Activated T-helper 1 cell treated with anti-CD3 and anti-CD28 coated beads, Interleukin-12 subunit alpha, Interleukin-12 subunit beta, Interleukin-2, Interleukin-4 antibody, amounts not matched to agents 30 ng/mL and 10 ng/mL and 1 ng/mL, durations not matched to agents 14 hours and 24 hours and 36 hours (primary cell): ENCODE measurements at regions of chr6 and their contacts with region 1.

Region 1: GRCh38 chr6:79869600-79870084 is 77.7 kb downstream of the ELOVL4 start:
- DNase-seq: peak; percentile 72
- H3K4me3 Mint-ChIP-seq: no peak overlapping the region
- H3K27ac Mint-ChIP-seq: no peak overlapping the region
- H3K4me1 Mint-ChIP-seq: peaks cover 9% of the 10 kb centered on the region
- H3K27me3 Mint-ChIP-seq: peaks cover 5% of the 10 kb centered on the region

Region 2: GRCh38 chr6:78867370-78868040 is 1002.1 kb before region 1 on chr6 and contains the start of gene IRAK1BP1:
- intact Hi-C with region 1: loop called (anchors 10 kb)
- DNase-seq: peak; percentile 79
- H3K4me3 Mint-ChIP-seq: peak within 1 kb of the TSS; percentile 97
- H3K27ac Mint-ChIP-seq: peak within 1 kb of the TSS; percentile 95
- H3K4me1 Mint-ChIP-seq: peaks cover 21% of the 10 kb centered on the region
- H3K27me3 Mint-ChIP-seq: peaks cover 2% of the 10 kb centered on the region
- total RNA-seq, gene IRAK1BP1: 3.0 TPM in 2 replicates

Region 3: GRCh38 chr6:79570129-79571029 is 299.3 kb before region 1 on chr6:
- intact Hi-C with region 1: loop called (anchors 1 kb)
- DNase-seq: no peak
- H3K4me3 Mint-ChIP-seq: no peak overlapping the region
- H3K27ac Mint-ChIP-seq: no peak overlapping the region
- H3K4me1 Mint-ChIP-seq: no peaks in the 10 kb centered on the region
- H3K27me3 Mint-ChIP-seq: peaks cover 6% of the 10 kb centered on the region

Region 4: GRCh38 chr6:79777713-79778579 is 91.7 kb before region 1 on chr6:
- intact Hi-C with region 1: loop called (anchors 1 kb)
- DNase-seq: peak; percentile 85
- H3K4me3 Mint-ChIP-seq: peak overlapping the region; percentile 67
- H3K27ac Mint-ChIP-seq: peak overlapping the region; percentile 21
- H3K4me1 Mint-ChIP-seq: peaks cover 10% of the 10 kb centered on the region
- H3K27me3 Mint-ChIP-seq: no peaks in the 10 kb centered on the region

Region 5: GRCh38 chr6:79813854-79814709 is 55.6 kb before region 1 on chr6:
- intact Hi-C with region 1: loop called (anchors 2 kb)
- DNase-seq: peak; percentile 37
- H3K4me3 Mint-ChIP-seq: no peak overlapping the region
- H3K27ac Mint-ChIP-seq: no peak overlapping the region
- H3K4me1 Mint-ChIP-seq: no peaks in the 10 kb centered on the region
- H3K27me3 Mint-ChIP-seq: peaks cover 8% of the 10 kb centered on the region

Region 6: GRCh38 chr6:80094017-80094416 is 224.4 kb after region 1 on chr6:
- intact Hi-C with region 1: loop called (anchors 2 kb)
- DNase-seq: no peak
- H3K4me3 Mint-ChIP-seq: no peak overlapping the region
- H3K27ac Mint-ChIP-seq: no peak overlapping the region
- H3K4me1 Mint-ChIP-seq: peaks cover 9% of the 10 kb centered on the region
- H3K27me3 Mint-ChIP-seq: peaks cover 12% of the 10 kb centered on the region